ENCODE measurements at regions of chr6 and their contacts with region 1.

Region 1: GRCh38 chr6:47822856-47823554 is 41.2 kb downstream of the OPN5 start:
- DNase-seq: no peak
- ATAC-seq: no peak
- H3K4me3 ChIP-seq: no peak overlapping the region
- H3K27ac ChIP-seq: no peak overlapping the region
- H3K4me1 ChIP-seq: no peaks in the 10 kb centered on the region
- H3K27me3 ChIP-seq: no peaks in the 10 kb centered on the region
- CTCF ChIP-seq: no peak

Region 2: DNA sequence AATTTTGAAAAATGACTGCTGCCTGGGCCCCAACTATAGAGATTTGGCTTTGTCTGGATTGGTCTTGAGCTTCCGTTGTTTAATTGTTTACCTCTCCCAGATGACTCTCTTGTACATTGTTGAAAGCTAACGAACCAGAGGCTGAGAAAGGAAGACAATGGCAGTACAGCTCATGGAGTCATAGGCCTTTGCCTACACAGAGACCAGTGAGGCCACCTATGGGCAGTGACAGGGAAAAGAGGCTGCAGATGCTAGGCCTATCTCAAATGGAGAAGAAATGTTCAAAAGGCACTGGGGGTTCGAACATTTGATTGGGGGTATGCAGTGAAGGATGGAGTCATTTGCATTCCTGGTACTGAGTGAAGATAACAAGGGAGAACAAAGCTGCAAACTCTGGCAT is 12.1 kb before region 1 on chr6:
- intact Hi-C with region 1: loop called in 1 of 2 experiments (anchors 1 kb)
- DNase-seq: no peak
- ATAC-seq: no peak
- H3K4me3 ChIP-seq: no peak overlapping the region
- H3K27ac ChIP-seq: no peak overlapping the region
- H3K4me1 ChIP-seq: no peaks in the 10 kb centered on the region
- H3K27me3 ChIP-seq: no peaks in the 10 kb centered on the region
- CTCF ChIP-seq: no peak